Aorta (tissue), 5 donors: ENCODE measurements at regions of chr10 and their contacts with region 1.

Region 1: GRCh38 chr10:6320320-6321010 is 117.7 kb downstream of the PFKFB3 start:
- DNase-seq: no peak
- ATAC-seq: no peak
- H3K4me3 ChIP-seq: no peak overlapping the region
- H3K27ac ChIP-seq: no peak overlapping the region
- H3K4me1 ChIP-seq: no peaks in the 10 kb centered on the region
- H3K27me3 ChIP-seq: no peaks in the 10 kb centered on the region

Region 2: GRCh38 chr10:6254201-6254600 is 66.3 kb before region 1 on chr10:
- intact Hi-C with region 1: no loop called
- DNase-seq: no peak
- ATAC-seq: no peak
- H3K4me3 ChIP-seq: no peak overlapping the region
- H3K27ac ChIP-seq: no peak overlapping the region
- H3K4me1 ChIP-seq: no peaks in the 10 kb centered on the region
- H3K27me3 ChIP-seq: no peaks in the 10 kb centered on the region

Region 3: GRCh38 chr10:6275022-6275997 is 45.2 kb before region 1 on chr10:
- intact Hi-C with region 1: loop called (anchors 2 to 5 kb)
- DNase-seq: peak; percentile 97 to 99
- ATAC-seq: peak; percentile 95
- H3K4me3 ChIP-seq: no peak overlapping the region
- H3K27ac ChIP-seq: peak overlapping the region; percentile 79 to 100
- H3K4me1 ChIP-seq: peaks cover 2 to 4% of the 10 kb centered on the region in 2 donors
- H3K27me3 ChIP-seq: no peaks in the 10 kb centered on the region